B cell (primary cell): ENCODE measurements at regions of chr6 and their contacts with region 1.

Region 1: DNA sequence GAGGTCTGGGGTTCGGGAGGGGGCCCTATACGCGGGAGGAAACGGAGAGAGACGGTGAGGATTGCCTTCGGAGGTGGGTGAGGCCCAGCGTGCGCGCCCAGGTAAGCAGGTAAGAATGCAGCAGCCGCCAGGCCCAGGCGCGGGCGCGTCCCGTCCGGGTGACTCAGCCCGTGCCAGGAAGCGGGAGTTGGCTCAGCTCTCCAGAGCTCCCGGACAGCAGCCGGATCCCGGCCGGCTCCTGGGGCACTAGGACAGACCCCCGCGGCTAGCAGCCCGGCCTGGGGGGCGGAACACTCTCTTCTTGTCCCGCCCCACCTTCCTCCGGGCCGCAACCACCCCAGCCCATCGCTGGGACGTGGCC is 1.5 kb upstream of the MDFI start:
- DNase-seq: no peak
- ATAC-seq: no peak
- H3K4me3 ChIP-seq: no peak overlapping the region
- H3K4me3 Mint-ChIP-seq: no peak overlapping the region
- H3K27ac ChIP-seq: no peak overlapping the region
- H3K27ac Mint-ChIP-seq: no peak overlapping the region
- H3K4me1 ChIP-seq: peaks cover 17 to 21% of the 10 kb centered on the region in 2 donors
- H3K4me1 Mint-ChIP-seq: peaks cover 15% of the 10 kb centered on the region
- H3K27me3 ChIP-seq: peaks cover 0 to 56% (median 19%) of the 10 kb centered on the region in 4 experiments
- H3K27me3 Mint-ChIP-seq: peaks cover 61% of the 10 kb centered on the region
- CTCF ChIP-seq: no peak

Region 2: GRCh38 chr6:41560431-41561192 is 76.2 kb before region 1 on chr6:
- CTCF ChIA-PET with region 1: no interaction called
- POLR2A ChIA-PET with region 1: no interaction called
- intact Hi-C with region 1: no loop called
- DNase-seq: peak; percentile 91
- ATAC-seq: peak; percentile 86
- H3K4me3 ChIP-seq: peak overlapping the region; percentile 53 to 86 (median 75)
- H3K4me3 Mint-ChIP-seq: peak overlapping the region; percentile 91
- H3K27ac ChIP-seq: peak overlapping the region; percentile 58 to 92
- H3K27ac Mint-ChIP-seq: peak overlapping the region; percentile 84
- H3K4me1 ChIP-seq: peaks cover 16 to 24% of the 10 kb centered on the region in 2 donors
- H3K4me1 Mint-ChIP-seq: peaks cover 39% of the 10 kb centered on the region
- H3K27me3 ChIP-seq: no peaks in the 10 kb centered on the region
- H3K27me3 Mint-ChIP-seq: no peaks in the 10 kb centered on the region
- CTCF ChIP-seq: no peak

Region 3: GRCh38 chr6:41591859-41592502 is 44.8 kb before region 1 on chr6:
- CTCF ChIA-PET with region 1: no interaction called
- POLR2A ChIA-PET with region 1: no interaction called
- intact Hi-C with region 1: no loop called
- DNase-seq: peak; percentile 83
- ATAC-seq: peak; percentile 84
- H3K4me3 ChIP-seq: no peak overlapping the region
- H3K4me3 Mint-ChIP-seq: no peak overlapping the region
- H3K27ac ChIP-seq: no peak overlapping the region
- H3K27ac Mint-ChIP-seq: no peak overlapping the region
- H3K4me1 ChIP-seq: peaks cover 0 to 3% of the 10 kb centered on the region in 2 donors
- H3K4me1 Mint-ChIP-seq: peaks cover 2% of the 10 kb centered on the region
- H3K27me3 ChIP-seq: no peaks in the 10 kb centered on the region
- H3K27me3 Mint-ChIP-seq: no peaks in the 10 kb centered on the region
- CTCF ChIP-seq: peak; percentile 87

Region 4: GRCh38 chr6:41672821-41673703 is 36.2 kb after region 1 on chr6:
- CTCF ChIA-PET with region 1: no interaction called
- POLR2A ChIA-PET with region 1: interaction called, 10 read pairs
- intact Hi-C with region 1: no loop called
- DNase-seq: no peak
- ATAC-seq: no peak
- H3K4me3 ChIP-seq: no peak overlapping the region
- H3K4me3 Mint-ChIP-seq: no peak overlapping the region
- H3K27ac ChIP-seq: no peak overlapping the region
- H3K27ac Mint-ChIP-seq: no peak overlapping the region
- H3K4me1 ChIP-seq: no peaks in the 10 kb centered on the region
- H3K4me1 Mint-ChIP-seq: peaks cover under 1% of the 10 kb centered on the region
- H3K27me3 ChIP-seq: peaks cover 0 to 10% (median 2%) of the 10 kb centered on the region in 4 experiments
- H3K27me3 Mint-ChIP-seq: peaks cover 30% of the 10 kb centered on the region
- CTCF ChIP-seq: no peak